ENCODE measurements at regions of chr17 and their contacts with region 1.

Region 1: DNA sequence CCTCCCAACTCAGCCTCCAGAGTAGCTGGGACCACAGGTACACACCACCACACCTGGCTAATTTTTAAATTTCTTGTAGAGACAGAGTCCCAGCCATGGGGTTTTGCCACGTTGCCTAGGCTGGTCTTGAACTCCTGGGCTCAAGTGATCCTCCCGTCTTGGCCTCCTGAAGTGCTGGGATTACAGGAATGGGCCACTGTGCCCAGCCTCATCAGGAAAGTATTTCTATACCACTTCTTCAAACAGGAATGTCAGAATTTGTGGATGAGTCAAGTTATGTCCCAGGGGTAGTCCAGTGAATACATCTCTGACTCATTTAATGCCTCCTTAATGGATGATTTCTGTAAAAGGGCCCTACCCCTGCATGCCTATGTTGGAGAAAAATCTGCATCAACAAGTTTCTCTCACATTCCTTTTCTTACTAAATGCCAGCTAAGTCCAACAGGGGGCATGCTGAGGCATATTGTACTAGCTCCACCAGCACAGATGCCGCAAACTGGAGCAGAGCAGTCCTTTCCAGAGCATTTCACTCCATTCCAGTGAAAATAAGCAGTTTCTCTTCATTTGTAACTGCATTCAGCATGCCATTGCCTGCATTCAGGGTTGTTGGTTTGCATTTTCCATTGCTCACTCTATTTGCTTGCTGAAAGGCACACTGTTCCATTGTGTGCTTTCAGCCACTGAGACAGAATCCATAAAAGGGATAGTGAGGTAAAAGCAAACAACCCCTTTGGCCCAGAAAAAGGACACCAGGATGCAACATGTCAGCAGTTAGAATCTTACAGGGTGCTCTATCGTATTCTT is 5.3 kb upstream of the CAVIN1 start:
- DNase-seq: peak; percentile 51
- ATAC-seq: peak; percentile 69 to 80

Region 2: DNA sequence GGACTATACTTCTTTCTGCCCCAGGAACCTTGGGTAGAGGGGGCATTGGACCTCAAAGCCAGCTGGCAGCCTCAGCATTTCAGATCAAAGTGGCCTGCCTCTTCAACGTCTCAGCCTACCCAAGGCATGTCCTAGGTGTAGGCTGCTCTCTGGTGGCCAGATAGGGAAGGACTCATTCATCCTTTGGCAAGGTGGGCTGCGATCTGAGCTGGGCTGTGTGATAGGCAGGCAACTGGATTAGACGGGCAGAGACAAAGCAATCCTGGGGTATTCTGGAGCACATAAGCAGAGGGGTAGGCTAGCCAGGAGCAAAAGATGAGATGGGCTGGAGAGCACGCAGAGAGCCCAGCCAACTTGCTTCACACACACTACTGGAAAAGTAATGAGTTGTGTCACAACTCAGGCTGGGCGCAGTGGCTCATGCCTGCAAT is 98.9 kb after region 1 on chr17:
- intact Hi-C with region 1: loop called in 1 of 2 experiments (anchors 10 kb)
- DNase-seq: peak; percentile 79
- ATAC-seq: peak; percentile 82 to 83

Region 3: GRCh38 chr17:42586514-42587230 is 158.3 kb after region 1 on chr17:
- intact Hi-C with region 1: no loop called
- DNase-seq: no peak
- ATAC-seq: no peak

Measured in left cardiac atrium (tissue), 4 donors.